B cell (primary cell): ENCODE measurements at regions of chr16 and their contacts with region 1.

Region 1: DNA sequence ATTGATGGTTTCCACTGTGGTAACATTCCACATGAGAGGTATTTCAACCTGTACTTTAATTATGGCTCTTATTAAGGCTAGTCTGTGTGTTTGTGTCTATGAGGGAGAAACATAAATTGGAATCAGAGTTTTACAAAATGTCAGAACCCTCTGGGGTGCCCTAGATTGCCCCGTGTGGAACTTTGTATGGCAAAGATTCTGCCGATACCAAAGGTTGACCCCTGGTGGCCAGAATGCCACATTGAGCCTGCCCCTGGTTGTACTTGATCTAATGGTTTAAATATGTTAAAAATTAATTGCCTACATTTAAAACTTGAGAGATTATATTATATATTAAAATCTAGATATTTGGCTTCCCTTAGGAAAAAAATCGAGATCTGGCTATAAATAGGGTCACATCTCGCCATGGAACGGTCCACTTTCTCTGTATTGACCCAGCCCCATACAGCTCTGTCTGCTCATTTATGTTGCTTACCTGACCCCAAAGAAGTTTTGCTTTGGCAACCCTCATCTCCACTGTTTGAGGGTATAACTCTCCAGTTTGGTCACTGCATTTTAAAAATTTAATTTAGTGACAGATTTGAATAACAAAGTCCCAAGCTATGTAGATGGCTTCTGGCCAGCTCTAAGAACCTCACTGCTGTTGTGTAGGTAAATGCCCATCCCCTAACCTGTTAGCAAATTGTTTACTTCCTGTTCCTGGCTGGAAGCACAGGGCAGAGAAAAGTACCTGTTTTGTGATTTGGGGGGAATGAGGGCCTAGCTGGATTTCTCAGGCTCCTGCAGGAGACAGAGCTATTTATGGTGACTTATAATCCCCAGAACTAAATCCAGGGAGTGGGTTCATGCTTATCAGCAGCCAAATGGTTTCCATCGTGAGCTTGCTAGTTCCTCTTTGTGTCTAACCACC is 95.0 kb downstream of the PLCG2 start:
- DNase-seq: peak; percentile 80
- ATAC-seq: peak; percentile 93
- H3K4me3 ChIP-seq: no peak overlapping the region
- H3K4me3 Mint-ChIP-seq: peak overlapping the region; percentile 4
- H3K27ac ChIP-seq: peak overlapping the region in 1 of 2 donors; percentile 48
- H3K27ac Mint-ChIP-seq: peak overlapping the region; percentile 67
- H3K4me1 ChIP-seq: peaks cover 22 to 24% of the 10 kb centered on the region in 2 donors
- H3K4me1 Mint-ChIP-seq: peaks cover 41% of the 10 kb centered on the region
- H3K27me3 ChIP-seq: no peaks in the 10 kb centered on the region
- H3K27me3 Mint-ChIP-seq: no peaks in the 10 kb centered on the region
- CTCF ChIP-seq: peak; percentile 97

Region 2: DNA sequence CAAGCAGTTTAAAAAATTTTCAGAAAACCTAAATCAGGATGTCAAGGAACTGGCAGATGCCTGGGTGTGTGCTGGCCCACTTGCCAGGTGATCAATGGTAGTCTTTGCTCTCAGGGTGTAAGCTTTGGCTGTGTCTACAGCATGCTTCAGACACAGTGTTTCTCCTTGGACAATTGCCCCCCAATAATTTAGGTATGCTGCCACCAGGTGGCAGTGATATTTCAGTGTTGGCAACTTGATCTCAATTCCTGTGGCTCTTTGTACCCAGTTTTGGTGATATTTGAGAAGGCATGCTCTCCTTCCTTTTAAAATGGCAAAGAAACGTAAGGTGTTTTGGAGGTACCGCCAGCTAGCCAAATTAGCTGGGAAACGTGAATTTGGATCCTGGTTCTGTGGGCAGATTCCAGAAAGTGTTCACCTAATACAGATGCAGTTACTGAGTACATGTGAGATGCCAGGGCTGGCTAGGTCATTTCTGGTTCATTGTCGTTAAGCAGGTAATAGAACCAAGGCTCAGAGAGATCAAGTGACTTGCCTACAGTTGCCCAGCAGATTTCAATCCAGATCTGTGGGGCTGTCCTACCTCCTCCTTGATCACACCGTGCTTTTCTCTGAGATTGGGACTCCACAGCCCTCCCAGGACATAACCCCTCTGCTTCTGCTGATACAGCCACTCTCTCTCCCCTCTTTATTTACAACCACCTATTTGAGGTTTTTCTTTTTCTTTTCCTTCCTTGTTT is 250.6 kb before region 1 on chr16:
- CTCF ChIA-PET with region 1: no interaction called
- POLR2A ChIA-PET with region 1: no interaction called
- intact Hi-C with region 1: loop called (anchors 10 kb)
- DNase-seq: peak; percentile 70
- ATAC-seq: peak; percentile 34
- H3K4me3 ChIP-seq: no peak overlapping the region
- H3K4me3 Mint-ChIP-seq: no peak overlapping the region
- H3K27ac ChIP-seq: no peak overlapping the region
- H3K27ac Mint-ChIP-seq: no peak overlapping the region
- H3K4me1 ChIP-seq: peaks cover 5 to 11% of the 10 kb centered on the region in 2 donors
- H3K4me1 Mint-ChIP-seq: peaks cover 16% of the 10 kb centered on the region
- H3K27me3 ChIP-seq: no peaks in the 10 kb centered on the region
- H3K27me3 Mint-ChIP-seq: no peaks in the 10 kb centered on the region
- CTCF ChIP-seq: peak; percentile 65

Region 3: DNA sequence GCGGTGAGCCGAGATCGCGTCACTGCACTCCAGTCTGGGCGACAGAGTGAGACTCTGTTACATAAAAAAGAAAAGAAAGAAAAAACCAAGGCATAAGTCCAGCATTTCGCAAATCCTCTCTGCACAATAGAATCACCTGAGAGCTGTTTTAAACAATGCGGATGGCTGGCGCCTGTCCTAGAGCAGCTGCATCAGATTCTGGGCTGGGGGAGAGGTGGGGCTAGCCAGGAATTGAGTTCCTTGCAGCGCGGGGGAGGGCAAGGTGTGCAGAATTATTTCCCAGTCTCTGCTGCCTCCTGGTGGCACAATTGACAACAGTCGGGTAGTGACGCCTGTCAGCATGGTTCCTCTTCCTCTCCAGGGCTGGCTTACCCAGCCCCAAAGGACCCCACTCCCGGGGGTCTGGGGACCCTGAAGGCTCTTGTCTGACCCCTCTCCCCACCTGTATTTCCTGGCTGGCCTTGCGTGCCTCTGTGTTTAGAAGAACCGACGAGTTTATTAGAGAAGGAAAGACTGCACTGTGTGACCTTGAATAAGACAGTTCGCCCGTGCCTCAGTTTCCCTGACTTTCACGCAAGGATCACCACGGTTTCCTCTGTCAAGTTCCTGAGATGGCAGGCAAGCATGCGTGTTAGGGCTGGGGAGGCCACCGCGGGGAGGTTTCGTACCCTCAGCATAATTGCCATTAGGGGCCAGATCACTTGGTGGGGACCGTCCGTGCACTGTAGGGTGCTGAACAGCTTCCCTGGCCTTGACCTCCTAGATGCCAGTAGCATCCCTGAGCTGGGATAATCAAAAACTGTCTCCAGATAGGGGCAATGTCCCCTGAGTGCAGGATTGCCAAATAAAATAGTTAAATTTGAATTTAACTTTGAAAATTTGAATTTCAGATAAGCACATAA is 136.0 kb before region 1 on chr16:
- CTCF ChIA-PET with region 1: interaction called, 128 read pairs
- POLR2A ChIA-PET with region 1: interaction called, 6 read pairs
- intact Hi-C with region 1: loop called (anchors 1 kb)
- DNase-seq: peak; percentile 91
- ATAC-seq: peak; percentile 64
- H3K4me3 ChIP-seq: peak overlapping the region; percentile 11 to 59 (median 39)
- H3K4me3 Mint-ChIP-seq: peak overlapping the region; percentile 83
- H3K27ac ChIP-seq: peak overlapping the region; percentile 70 to 88
- H3K27ac Mint-ChIP-seq: peak overlapping the region; percentile 92
- H3K4me1 ChIP-seq: peaks cover 42 to 54% of the 10 kb centered on the region in 2 donors
- H3K4me1 Mint-ChIP-seq: peaks cover 50% of the 10 kb centered on the region
- H3K27me3 ChIP-seq: no peaks in the 10 kb centered on the region
- H3K27me3 Mint-ChIP-seq: no peaks in the 10 kb centered on the region
- CTCF ChIP-seq: peak; percentile 94

Region 4: DNA sequence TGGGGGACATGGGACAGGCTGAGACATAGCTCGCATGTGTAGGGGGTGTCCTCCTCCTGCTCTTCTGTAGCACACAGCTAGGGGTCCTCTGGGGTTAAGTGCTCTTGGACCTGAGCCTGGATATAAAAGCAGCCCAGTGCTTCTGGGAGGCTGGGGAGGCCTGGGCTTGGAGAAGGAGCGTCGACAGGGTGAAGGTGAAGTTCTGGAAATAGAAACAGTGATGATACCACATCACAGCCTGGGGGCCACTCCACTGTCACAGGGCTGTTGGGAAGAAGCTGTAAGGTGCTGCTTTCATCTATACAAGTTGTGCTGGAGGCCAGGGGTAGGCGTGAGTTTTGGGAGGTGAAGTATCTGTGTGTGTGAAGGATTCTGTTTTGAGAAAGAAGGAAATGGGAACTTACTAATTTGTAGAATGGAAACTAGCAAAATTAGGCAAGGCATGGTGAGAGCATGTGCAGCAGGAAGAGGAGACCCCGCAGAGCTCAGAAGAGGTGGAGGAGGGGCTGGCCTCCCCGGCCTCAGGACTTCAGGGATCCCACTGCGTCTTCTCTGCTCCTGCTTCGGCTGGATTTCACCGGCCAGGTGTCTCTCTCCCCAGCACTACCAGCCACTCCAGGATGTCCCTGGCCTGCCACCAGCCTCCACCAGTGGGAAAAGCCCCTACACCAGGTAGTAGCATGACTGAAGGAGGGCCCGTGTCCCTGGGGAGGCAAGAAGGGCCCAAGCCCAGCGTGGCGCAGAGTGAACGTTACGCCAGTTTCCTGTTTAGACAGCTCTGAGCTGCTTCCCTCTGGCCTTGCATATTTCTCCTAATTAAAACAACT is 75.6 kb before region 1 on chr16:
- CTCF ChIA-PET with region 1: interaction called, 13 read pairs
- POLR2A ChIA-PET with region 1: no interaction called
- intact Hi-C with region 1: no loop called
- DNase-seq: peak; percentile 87
- ATAC-seq: peak; percentile 80
- H3K4me3 ChIP-seq: peak overlapping the region in 3 of 5 experiments; percentile 4 to 38 (median 6)
- H3K4me3 Mint-ChIP-seq: peak overlapping the region; percentile 77
- H3K27ac ChIP-seq: peak overlapping the region; percentile 90 to 97
- H3K27ac Mint-ChIP-seq: peak overlapping the region; percentile 97
- H3K4me1 ChIP-seq: peaks cover 90 to 98% of the 10 kb centered on the region in 2 donors
- H3K4me1 Mint-ChIP-seq: peaks cover 77% of the 10 kb centered on the region
- H3K27me3 ChIP-seq: no peaks in the 10 kb centered on the region
- H3K27me3 Mint-ChIP-seq: no peaks in the 10 kb centered on the region
- CTCF ChIP-seq: no peak

Region 5: DNA sequence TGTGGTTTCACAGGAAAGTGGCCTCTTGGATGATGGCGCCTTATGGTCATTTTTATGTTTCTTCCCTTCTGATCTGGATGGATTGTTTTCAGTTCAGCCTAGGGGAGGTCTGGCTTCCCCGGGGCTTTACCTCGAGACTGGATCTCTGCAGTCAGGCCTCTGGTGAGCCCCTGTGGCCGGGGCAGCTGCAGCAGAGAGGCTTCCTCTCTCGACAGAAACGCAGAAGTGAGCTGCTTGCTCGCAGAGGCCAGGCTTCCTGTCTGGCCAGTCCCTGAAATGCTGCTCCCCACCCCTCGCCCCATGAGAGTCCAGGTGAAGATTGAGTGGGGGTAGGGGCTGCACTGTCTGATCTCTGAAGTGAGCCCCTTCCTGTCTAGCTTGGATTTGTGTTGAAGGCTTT is 51.0 kb before region 1 on chr16:
- CTCF ChIA-PET with region 1: interaction called, 27 read pairs
- POLR2A ChIA-PET with region 1: interaction called, 3 read pairs
- intact Hi-C with region 1: loop called (anchors 5 kb)
- DNase-seq: peak; percentile 86
- ATAC-seq: peak; percentile 51
- H3K4me3 ChIP-seq: peak overlapping the region; percentile 23 to 65 (median 54)
- H3K4me3 Mint-ChIP-seq: peak overlapping the region; percentile 75
- H3K27ac ChIP-seq: peak overlapping the region; percentile 94 to 98
- H3K27ac Mint-ChIP-seq: peak overlapping the region; percentile 92
- H3K4me1 ChIP-seq: peaks cover 96 to 100% of the 10 kb centered on the region in 2 donors
- H3K4me1 Mint-ChIP-seq: peaks cover 94% of the 10 kb centered on the region
- H3K27me3 ChIP-seq: no peaks in the 10 kb centered on the region
- H3K27me3 Mint-ChIP-seq: no peaks in the 10 kb centered on the region
- CTCF ChIP-seq: no peak

Region 6: DNA sequence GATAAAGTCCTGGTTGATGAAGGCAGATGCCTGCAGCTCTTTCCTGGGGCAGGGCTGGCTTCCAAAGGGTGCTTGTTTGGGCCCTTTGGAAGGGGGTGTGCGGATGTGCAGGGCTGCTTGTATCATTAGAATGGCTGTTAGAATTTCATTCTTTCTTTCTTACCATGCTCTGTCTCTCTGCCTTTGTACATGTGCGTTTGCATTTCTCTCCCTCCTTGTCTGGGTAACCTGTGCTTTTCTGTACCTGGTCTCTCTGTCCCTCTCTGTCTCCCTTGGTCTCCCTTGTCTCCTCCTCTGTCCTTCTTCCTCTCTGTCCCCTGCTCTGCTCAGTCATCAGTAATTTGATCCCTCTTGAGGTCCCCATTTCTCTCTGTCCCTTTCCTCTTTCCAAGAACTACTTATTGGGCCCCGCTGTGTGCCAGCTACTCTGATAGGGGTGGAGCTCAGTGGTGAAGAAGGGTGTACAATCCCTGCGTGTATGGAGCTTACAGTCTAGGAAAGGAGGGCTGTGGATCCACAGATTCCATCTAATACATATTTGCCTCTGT is 25.7 kb before region 1 on chr16:
- CTCF ChIA-PET with region 1: interaction called, 19 read pairs
- POLR2A ChIA-PET with region 1: interaction called, 6 read pairs
- intact Hi-C with region 1: no loop called
- DNase-seq: no peak
- ATAC-seq: no peak
- H3K4me3 ChIP-seq: no peak overlapping the region
- H3K4me3 Mint-ChIP-seq: peak overlapping the region; percentile 4
- H3K27ac ChIP-seq: peak overlapping the region in 1 of 2 donors; percentile 31
- H3K27ac Mint-ChIP-seq: peak overlapping the region; percentile 82
- H3K4me1 ChIP-seq: peaks cover 50 to 74% of the 10 kb centered on the region in 2 donors
- H3K4me1 Mint-ChIP-seq: peaks cover 86% of the 10 kb centered on the region
- H3K27me3 ChIP-seq: no peaks in the 10 kb centered on the region
- H3K27me3 Mint-ChIP-seq: no peaks in the 10 kb centered on the region
- CTCF ChIP-seq: no peak

Region 7: GRCh38 chr16:81885976-81886586 is 12.0 kb after region 1 on chr16:
- CTCF ChIA-PET with region 1: interaction called, 90 read pairs
- POLR2A ChIA-PET with region 1: no interaction called
- intact Hi-C with region 1: no loop called
- DNase-seq: peak; percentile 59
- ATAC-seq: peak; percentile 74
- H3K4me3 ChIP-seq: no peak overlapping the region
- H3K4me3 Mint-ChIP-seq: no peak overlapping the region
- H3K27ac ChIP-seq: peak overlapping the region in 1 of 2 donors; percentile 32
- H3K27ac Mint-ChIP-seq: peak overlapping the region; percentile 7
- H3K4me1 ChIP-seq: no peaks in the 10 kb centered on the region
- H3K4me1 Mint-ChIP-seq: peaks cover 2% of the 10 kb centered on the region
- H3K27me3 ChIP-seq: no peaks in the 10 kb centered on the region
- H3K27me3 Mint-ChIP-seq: no peaks in the 10 kb centered on the region
- CTCF ChIP-seq: peak; percentile 93